GM10248 (cell line): ENCODE measurements at regions of chr9 and their contacts with region 1.

Region 1: GRCh38 chr9:93682232-93682968 is 106.0 kb downstream of the PHF2 start:
- DNase-seq: peak; percentile 79
- CTCF ChIP-seq: peak; percentile 81

Region 2: GRCh38 chr9:93668261-93668871 is 14.0 kb before region 1 on chr9:
- CTCF ChIA-PET with region 1: interaction called, 18 read pairs
- POLR2A ChIA-PET with region 1: no interaction called
- DNase-seq: no peak
- CTCF ChIP-seq: no peak

Region 3: GRCh38 chr9:93962561-93963440 is 280.4 kb after region 1 on chr9:
- CTCF ChIA-PET with region 1: interaction called, 58 read pairs
- POLR2A ChIA-PET with region 1: no interaction called
- DNase-seq: peak; percentile 82
- CTCF ChIP-seq: peak; percentile 79

Region 4: DNA sequence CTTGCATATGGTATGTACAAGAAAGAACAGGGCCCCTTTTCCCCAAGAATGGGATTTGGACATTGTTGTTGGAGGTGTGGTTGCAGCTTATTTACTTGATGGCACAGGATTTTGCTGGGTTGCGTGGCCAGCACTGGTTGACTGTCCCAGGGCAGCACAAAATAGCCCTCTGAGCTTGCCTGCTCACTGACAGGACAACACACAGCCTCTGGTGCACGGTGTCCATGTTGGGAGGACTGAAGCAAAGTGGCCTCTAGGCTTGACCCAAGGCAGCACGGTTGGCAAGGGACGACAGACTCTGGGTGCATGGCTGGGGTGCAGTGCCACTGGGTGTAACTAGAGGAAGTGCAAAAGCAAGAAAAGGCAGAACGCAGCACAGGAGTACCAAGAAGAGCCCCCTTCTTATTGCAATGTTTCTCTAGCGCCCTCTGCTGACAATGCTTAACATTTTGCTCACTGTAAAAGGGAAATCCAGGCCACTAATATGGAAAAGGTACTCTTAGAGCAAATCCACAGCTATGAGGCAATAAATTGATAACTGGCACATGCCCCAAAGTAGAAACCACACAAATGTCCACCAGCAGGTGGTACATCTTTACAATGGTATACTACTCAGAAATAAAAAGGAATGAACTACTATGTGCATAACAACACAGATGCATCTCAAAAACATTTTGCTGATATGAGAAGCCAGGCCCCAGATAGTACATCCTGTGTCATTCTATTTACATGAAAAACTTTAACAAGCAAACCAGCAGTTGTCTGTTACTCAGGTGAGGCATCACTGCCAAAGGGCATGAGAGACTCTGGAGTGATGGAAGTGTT is 320.1 kb after region 1 on chr9:
- CTCF ChIA-PET with region 1: interaction called, 38 read pairs
- POLR2A ChIA-PET with region 1: no interaction called
- DNase-seq: peak; percentile 47
- CTCF ChIP-seq: peak; percentile 71

Region 5: GRCh38 chr9:94014065-94014654 is 331.8 kb after region 1 on chr9:
- CTCF ChIA-PET with region 1: interaction called, 12 read pairs
- POLR2A ChIA-PET with region 1: no interaction called
- DNase-seq: peak; percentile 37
- CTCF ChIP-seq: peak; percentile 65